Activated T-helper 1 cell treated with anti-CD3 and anti-CD28 coated beads, Interleukin-12 subunit alpha, Interleukin-12 subunit beta, Interleukin-2, Interleukin-4 antibody, amounts not matched to agents 30 ng/mL and 10 ng/mL and 1 ng/mL, durations not matched to agents 14 hours and 24 hours and 36 hours (primary cell): ENCODE measurements at regions of chr9 and their contacts with region 1.

Region 1: GRCh38 chr9:33858346-33858885 is 41.5 kb downstream of the UBE2R2 start:
- DNase-seq: no peak
- H3K4me3 Mint-ChIP-seq: no peak overlapping the region
- H3K27ac Mint-ChIP-seq: no peak overlapping the region
- H3K4me1 Mint-ChIP-seq: peaks cover 5% of the 10 kb centered on the region
- H3K27me3 Mint-ChIP-seq: no peaks in the 10 kb centered on the region

Region 2: DNA sequence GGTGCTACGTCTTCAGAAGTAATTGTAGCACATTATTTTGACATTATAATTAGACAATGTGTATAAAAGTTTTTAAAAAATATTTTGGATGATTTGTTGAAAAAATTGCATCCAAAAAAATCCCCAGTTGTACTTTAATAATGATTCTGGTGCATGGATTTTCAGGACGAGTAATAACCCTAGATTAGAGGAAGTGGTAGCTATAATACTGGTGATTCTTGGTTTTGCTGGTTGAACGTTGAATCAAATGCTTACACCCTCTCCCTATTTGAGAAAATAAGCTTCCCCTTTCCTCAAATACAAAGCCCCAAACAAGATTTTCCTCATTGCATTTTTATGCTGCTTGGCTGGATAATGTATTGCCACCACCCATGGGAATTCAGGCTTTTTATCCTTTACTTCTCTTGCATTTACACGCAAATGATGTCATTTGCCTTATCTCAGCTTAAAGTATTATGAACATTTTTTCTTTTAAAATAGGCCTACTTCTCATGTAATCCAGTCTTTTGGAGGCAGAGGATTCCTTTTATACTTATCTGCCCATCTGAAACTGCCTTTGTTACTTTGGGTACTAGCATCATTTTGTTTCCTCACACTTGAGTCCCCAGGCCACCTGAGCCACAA is 44.9 kb after region 1 on chr9:
- intact Hi-C with region 1: loop called (anchors 5 kb)
- DNase-seq: no peak
- H3K4me3 Mint-ChIP-seq: no peak overlapping the region
- H3K27ac Mint-ChIP-seq: no peak overlapping the region
- H3K4me1 Mint-ChIP-seq: peaks cover 23% of the 10 kb centered on the region
- H3K27me3 Mint-ChIP-seq: no peaks in the 10 kb centered on the region